Activated naive CD4-positive, alpha-beta T cell treated with anti-CD3 and anti-CD28 coated beads for 36 hours (primary cell): ENCODE measurements at regions of chr17 and their contacts with region 1.

Region 1: GRCh38 chr17:17591355-17592298 is at the start of gene PEMT:
- DNase-seq: peak; percentile 97
- H3K4me3 Mint-ChIP-seq: peak within 1 kb of the TSS; percentile 93
- H3K27ac Mint-ChIP-seq: peak within 1 kb of the TSS; percentile 88
- H3K4me1 Mint-ChIP-seq: peaks cover 20% of the 10 kb centered on the region
- H3K27me3 Mint-ChIP-seq: no peaks in the 10 kb centered on the region
- total RNA-seq, gene PEMT: 33.7 to 35.6 TPM

Region 2: GRCh38 chr17:17041571-17042380 is 549.9 kb before region 1 on chr17:
- CTCF ChIA-PET with region 1: no interaction called
- intact Hi-C with region 1: loop called (anchors 5 kb)
- DNase-seq: peak; percentile 97
- H3K4me3 Mint-ChIP-seq: peak overlapping the region; percentile 60
- H3K27ac Mint-ChIP-seq: no peak overlapping the region
- H3K4me1 Mint-ChIP-seq: peaks cover 45% of the 10 kb centered on the region
- H3K27me3 Mint-ChIP-seq: no peaks in the 10 kb centered on the region

Region 3: GRCh38 chr17:17280613-17281549 is 310.7 kb before region 1 on chr17 and contains the start of gene COPS3:
- CTCF ChIA-PET with region 1: no interaction called
- intact Hi-C with region 1: loop called (anchors 1 kb)
- DNase-seq: peak; percentile 99
- H3K4me3 Mint-ChIP-seq: peak within 1 kb of the TSS; percentile 94
- H3K27ac Mint-ChIP-seq: peak within 1 kb of the TSS; percentile 88
- H3K4me1 Mint-ChIP-seq: peaks cover 39% of the 10 kb centered on the region
- H3K27me3 Mint-ChIP-seq: no peaks in the 10 kb centered on the region
- total RNA-seq, gene COPS3: 103 to 104 TPM

Region 4: GRCh38 chr17:17561408-17562145 is 30.1 kb before region 1 on chr17:
- CTCF ChIA-PET with region 1: no interaction called
- intact Hi-C with region 1: no loop called
- DNase-seq: no peak
- H3K4me3 Mint-ChIP-seq: no peak overlapping the region
- H3K27ac Mint-ChIP-seq: no peak overlapping the region
- H3K4me1 Mint-ChIP-seq: no peaks in the 10 kb centered on the region
- H3K27me3 Mint-ChIP-seq: no peaks in the 10 kb centered on the region

Region 5: DNA sequence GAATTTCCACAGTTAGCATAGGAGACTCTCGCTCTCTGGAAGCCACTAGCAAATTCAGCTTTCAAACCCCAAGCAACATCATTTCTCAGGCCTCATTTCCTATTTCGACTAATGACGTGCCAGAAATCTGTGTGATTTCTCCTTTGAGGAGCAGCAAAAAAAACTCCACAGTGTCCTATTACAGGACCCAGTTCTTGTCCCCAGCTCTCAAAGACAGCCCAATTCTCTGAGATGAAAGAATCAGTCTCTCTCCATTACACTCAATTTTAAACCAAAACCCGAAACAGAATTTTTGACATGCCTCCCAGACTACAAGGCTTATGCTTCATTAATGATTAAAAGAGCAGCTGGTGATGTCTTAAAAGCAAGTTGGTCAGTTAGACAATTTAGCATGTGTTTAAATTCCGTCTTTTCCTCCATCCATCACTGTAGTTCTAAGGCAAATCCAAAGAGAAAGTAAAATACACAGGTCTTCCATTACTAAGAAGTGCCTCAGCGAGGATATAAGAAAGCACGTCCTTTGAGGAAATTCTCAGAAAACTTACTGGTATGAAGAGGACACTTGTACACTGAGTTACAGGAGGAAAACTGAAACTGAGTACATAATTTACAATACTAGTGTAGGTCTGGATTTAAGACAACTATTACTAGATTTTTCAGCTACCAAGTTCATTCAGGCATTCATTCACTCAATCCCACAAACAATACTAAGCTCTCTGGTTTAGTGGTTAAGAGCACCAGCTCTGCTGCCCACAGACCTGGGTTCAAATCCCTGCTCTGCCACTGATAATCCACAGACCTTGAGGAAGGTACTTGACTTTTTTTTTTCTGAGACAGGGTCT is 368.1 kb after region 1 on chr17:
- CTCF ChIA-PET with region 1: no interaction called
- intact Hi-C with region 1: loop called (anchors 5 kb)
- DNase-seq: peak; percentile 60
- H3K4me3 Mint-ChIP-seq: peak overlapping the region; percentile 74
- H3K27ac Mint-ChIP-seq: peak overlapping the region; percentile 96
- H3K4me1 Mint-ChIP-seq: peaks cover 72% of the 10 kb centered on the region
- H3K27me3 Mint-ChIP-seq: no peaks in the 10 kb centered on the region

Region 6: GRCh38 chr17:18038861-18039534 is 447.4 kb after region 1 on chr17 and contains the starts of genes ATPAF2 and GID4:
- CTCF ChIA-PET with region 1: no interaction called
- intact Hi-C with region 1: loop called (anchors 1 kb)
- DNase-seq: peak; percentile 100
- H3K4me3 Mint-ChIP-seq: peak within 1 kb of the TSS; percentile 86
- H3K27ac Mint-ChIP-seq: peak within 1 kb of the TSS; percentile 79
- H3K4me1 Mint-ChIP-seq: peaks cover 40% of the 10 kb centered on the region
- H3K27me3 Mint-ChIP-seq: no peaks in the 10 kb centered on the region
- total RNA-seq, gene ATPAF2: 24.7 to 25.7 TPM
- total RNA-seq, gene GID4: 5.2 to 6.0 TPM